Spleen (tissue), 13 donors: ENCODE measurements at regions of chr12 and their contacts with region 1.

Region 1: DNA sequence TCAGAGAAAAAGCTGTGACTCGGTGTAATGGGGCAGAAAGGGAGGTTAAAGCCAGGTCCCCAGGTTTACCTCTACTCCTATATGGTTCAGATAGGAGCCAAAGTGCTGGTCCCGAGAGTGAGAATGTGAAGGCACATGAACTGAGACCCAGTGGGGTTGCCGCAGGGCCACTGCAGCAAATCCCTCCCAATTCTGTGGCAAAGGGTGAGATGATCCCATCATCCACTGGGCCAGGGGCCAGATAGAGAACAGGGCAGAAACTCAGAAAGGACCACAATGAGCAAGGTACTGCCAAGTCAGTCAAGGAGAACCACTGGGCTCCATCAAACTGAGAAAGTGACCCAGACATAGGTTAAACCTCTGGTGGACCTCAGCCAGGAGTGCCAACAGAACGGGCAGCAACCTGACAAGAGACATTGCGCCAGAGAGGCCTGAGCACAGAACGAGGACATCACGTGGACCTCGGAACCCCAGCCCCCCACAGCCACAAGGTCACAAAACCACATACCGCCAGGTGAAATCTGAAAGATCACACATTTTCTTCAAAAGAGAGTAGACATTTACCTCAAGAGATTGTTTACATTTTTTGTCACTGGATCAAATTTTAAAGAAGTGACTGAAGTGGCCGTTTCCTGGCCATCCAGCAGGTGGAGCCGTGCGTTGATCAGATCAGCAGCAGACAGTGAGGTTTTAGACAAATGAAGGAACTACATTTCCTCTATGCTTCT is 20.5 kb upstream of the ITPR2 start:
- DNase-seq: peak; percentile 89
- H3K4me3 ChIP-seq: no peak overlapping the region
- H3K27ac ChIP-seq: peak overlapping the region in 1 of 8 donors; percentile 43
- H3K4me1 ChIP-seq: peaks cover 0 to 19% (median 9%) of the 10 kb centered on the region in 6 donors
- H3K27me3 ChIP-seq: no peaks in the 10 kb centered on the region
- CTCF ChIP-seq: peak; percentile 57 to 89 (median 85)
- POLR2A ChIP-seq: no peak

Region 2: GRCh38 chr12:26614020-26614616 is 239.3 kb before region 1 on chr12:
- intact Hi-C with region 1: no loop called
- DNase-seq: no peak
- H3K4me3 ChIP-seq: no peak overlapping the region
- H3K27ac ChIP-seq: no peak overlapping the region
- H3K4me1 ChIP-seq: no peaks in the 10 kb centered on the region
- H3K27me3 ChIP-seq: no peaks in the 10 kb centered on the region
- CTCF ChIP-seq: peak in 7 of 11 experiments; percentile 27 to 54 (median 49)
- POLR2A ChIP-seq: no peak

Region 3: DNA sequence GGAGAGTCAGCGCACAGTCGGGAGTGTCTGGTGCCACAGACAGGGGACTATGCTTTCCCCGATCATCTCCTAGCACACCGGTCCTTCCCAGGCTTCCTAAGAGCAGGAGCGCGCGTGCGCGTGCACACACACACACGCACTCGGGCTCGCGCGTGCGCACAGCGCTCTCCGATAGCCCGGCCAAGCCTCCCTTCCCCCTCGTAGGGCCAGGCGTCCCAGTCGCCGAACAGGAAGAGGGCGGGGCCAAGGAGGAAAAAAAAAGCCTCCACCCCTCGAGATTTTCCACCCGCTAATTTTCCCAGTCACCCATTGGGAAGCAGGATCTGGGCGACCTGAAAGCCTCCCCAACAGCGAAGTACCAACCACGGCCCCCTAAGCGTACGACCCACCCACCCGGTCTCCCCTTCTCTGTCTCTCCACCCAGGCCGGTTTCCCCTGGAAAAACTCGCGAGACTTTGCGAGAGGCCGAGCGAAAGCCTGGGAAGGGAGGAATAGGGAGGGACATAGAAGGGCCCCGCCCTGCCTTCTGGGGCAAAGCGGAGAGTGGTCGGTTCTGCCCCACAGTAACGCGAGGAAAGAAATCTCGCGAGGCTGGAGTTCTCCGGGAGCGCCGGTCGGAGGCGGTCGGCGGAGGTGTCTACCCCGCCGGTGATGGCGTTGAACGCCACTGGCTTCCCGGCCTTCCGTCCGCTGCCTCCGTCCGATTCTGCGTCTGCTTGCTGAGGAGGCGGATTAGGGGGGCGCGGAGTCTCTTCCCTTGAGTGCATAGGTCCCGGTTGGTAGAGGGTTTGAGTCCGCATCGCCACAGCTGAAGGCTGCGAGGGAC is 84.6 kb after region 1 on chr12 and contains the starts of genes FGFR1OP2 and INTS13:
- intact Hi-C with region 1: loop called (anchors 10 kb)
- DNase-seq: peak; percentile 99
- H3K4me3 ChIP-seq: peak within 1 kb of the TSS; percentile 74 to 91 (median 82)
- H3K27ac ChIP-seq: peak within 1 kb of the TSS; percentile 89 to 98 (median 96)
- H3K4me1 ChIP-seq: peaks cover 42 to 89% (median 64%) of the 10 kb centered on the region in 6 donors
- H3K27me3 ChIP-seq: no peaks in the 10 kb centered on the region
- CTCF ChIP-seq: peak in 4 of 11 experiments; percentile 24 to 64 (median 44)
- POLR2A ChIP-seq: peak; percentile 76 to 91 (median 87)
- total RNA-seq, gene FGFR1OP2: 62.2 to 142 (median 77.2) TPM
- total RNA-seq, gene INTS13: 16.4 to 30.0 (median 21.2) TPM